ENCODE measurements at regions of chr9 and their contacts with region 1.

Region 1: DNA sequence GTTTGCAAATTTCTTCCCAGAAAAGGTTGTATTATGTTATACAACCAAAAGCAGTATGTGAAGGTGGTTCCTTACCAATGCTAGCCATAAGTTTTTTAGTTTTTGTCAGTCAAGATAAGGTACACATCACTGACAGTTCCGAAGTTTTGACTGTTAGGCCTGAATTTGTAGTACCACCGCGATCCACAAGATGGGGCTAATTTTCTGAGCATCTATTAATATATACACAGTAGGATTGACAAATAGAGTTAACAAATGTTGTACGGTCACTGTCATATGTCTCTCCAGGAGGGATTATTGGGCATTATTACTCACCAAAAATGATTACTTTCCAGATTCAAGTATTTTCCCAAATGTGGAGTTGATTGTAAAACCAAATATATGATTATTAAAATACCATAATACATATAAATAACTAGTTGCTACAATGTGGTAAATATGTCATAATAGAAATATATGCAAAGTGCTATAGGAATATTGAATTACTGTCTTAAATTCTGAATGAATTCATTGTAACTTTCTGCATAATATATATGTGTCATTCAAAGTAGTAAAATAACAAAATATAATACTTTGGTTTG is 28.4 kb upstream of the LRRC19 start:
- DNase-seq: peak; percentile 78
- H3K4me3 ChIP-seq: no peak overlapping the region
- H3K27ac ChIP-seq: no peak overlapping the region
- H3K4me1 ChIP-seq: no peaks in the 10 kb centered on the region
- H3K27me3 ChIP-seq: no peaks in the 10 kb centered on the region
- CTCF ChIP-seq: peak; percentile 60 to 62
- POLR2A ChIP-seq: no peak

Region 2: GRCh38 chr9:26537211-26537610 is 496.7 kb before region 1 on chr9:
- CTCF ChIA-PET with region 1: no interaction called
- POLR2A ChIA-PET with region 1: no interaction called
- dilution Hi-C with region 1: no loop called
- intact Hi-C with region 1: no loop called
- DNase-seq: no peak
- H3K4me3 ChIP-seq: no peak overlapping the region
- H3K27ac ChIP-seq: no peak overlapping the region
- H3K4me1 ChIP-seq: no peaks in the 10 kb centered on the region
- H3K27me3 ChIP-seq: no peaks in the 10 kb centered on the region
- CTCF ChIP-seq: no peak
- POLR2A ChIP-seq: no peak

Region 3: DNA sequence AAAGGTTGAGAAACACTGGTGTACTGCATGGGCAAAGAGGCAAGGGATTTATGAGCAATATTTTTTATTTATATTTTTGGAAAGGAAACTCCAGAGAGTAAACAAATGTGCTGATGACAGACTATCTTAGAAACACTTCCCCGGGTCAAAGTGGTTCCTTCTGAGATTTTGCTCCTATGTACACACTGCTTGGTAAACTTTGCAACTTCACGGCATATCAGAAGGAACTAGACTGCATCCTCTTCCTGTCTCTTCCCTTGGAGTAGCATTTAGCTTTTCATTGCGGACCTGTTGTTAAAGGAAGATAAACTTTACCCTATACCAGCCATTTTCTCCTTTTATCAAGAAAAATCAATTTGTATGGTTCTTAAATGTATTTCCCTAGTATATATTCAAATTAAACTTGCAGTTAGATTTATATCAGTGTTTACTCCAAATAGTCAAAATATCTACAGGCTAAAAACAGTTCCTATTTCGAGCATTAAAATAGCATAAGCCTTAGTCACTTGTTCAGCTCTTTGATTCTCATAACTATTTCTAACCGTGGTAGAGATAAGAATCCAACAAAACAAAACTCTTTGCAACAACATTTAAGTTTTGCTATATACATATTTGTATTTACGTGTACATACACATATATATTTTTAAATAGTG is 19.6 kb after region 1 on chr9:
- CTCF ChIA-PET with region 1: no interaction called
- POLR2A ChIA-PET with region 1: no interaction called
- dilution Hi-C with region 1: no loop called
- intact Hi-C with region 1: loop called (anchors 2 kb)
- DNase-seq: peak; percentile 98
- H3K4me3 ChIP-seq: peak overlapping the region in 1 of 3 experiments; percentile 45
- H3K27ac ChIP-seq: peak overlapping the region; percentile 64
- H3K4me1 ChIP-seq: peaks cover 22% of the 10 kb centered on the region
- H3K27me3 ChIP-seq: no peaks in the 10 kb centered on the region
- CTCF ChIP-seq: no peak
- POLR2A ChIP-seq: peak; percentile 84

Region 4: GRCh38 chr9:27194401-27195091 is 160.6 kb after region 1 on chr9:
- CTCF ChIA-PET with region 1: interaction called, 4 read pairs
- POLR2A ChIA-PET with region 1: no interaction called
- dilution Hi-C with region 1: no loop called
- intact Hi-C with region 1: loop called (anchors 5 kb)
- DNase-seq: peak; percentile 85
- H3K4me3 ChIP-seq: no peak overlapping the region
- H3K27ac ChIP-seq: peak overlapping the region; percentile 72
- H3K4me1 ChIP-seq: peaks cover 42% of the 10 kb centered on the region
- H3K27me3 ChIP-seq: no peaks in the 10 kb centered on the region
- CTCF ChIP-seq: no peak
- POLR2A ChIP-seq: no peak

Region 5: GRCh38 chr9:27247756-27248155 is 213.8 kb after region 1 on chr9:
- CTCF ChIA-PET with region 1: interaction called, 6 read pairs
- POLR2A ChIA-PET with region 1: no interaction called
- dilution Hi-C with region 1: no loop called
- intact Hi-C with region 1: loop called (anchors 1 kb)
- DNase-seq: peak; percentile 47
- H3K4me3 ChIP-seq: no peak overlapping the region
- H3K27ac ChIP-seq: no peak overlapping the region
- H3K4me1 ChIP-seq: no peaks in the 10 kb centered on the region
- H3K27me3 ChIP-seq: peaks cover 0 to 2% of the 10 kb centered on the region in 2 experiments
- CTCF ChIP-seq: peak; percentile 51 to 62
- POLR2A ChIP-seq: no peak